B cell (primary cell): ENCODE measurements at regions of chr6 and their contacts with region 1.

Region 1: DNA sequence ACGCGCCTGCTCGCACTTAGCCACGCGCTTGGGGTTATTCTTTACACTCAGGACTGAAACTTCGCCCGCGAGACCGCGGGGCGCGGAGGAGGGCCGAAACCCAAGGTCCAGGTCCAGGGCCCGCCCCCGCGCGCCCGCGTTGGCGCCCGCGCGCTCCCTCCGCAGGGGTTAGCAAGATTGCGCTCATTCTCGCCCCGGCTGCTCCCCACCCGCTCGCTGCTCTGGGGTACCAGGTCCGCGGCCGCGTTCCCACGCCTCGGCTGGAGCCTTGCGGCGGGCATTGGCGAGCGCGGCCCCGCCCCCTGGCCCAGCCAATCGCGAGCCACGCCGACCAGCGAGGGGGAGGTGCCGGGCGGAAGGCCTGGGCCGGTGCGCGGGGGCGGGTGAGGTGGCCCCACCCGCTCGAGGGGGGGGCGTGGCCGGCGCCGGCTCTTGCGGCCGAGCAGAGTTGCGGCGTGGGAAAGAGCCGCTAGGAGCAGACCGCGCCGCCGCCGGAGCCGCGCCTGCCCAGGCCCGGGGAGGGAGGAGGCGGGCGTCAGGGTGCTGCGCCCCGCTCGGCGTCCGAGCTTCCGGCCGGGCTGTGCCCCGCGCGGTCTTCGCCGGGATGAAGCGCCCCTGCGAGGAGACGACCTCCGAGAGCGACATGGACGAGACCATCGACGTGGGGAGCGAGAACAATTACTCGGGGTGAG is at the start of gene HEY2:
- DNase-seq: peak; percentile 92
- ATAC-seq: peak; percentile 94
- H3K4me3 ChIP-seq: peak within 1 kb of the TSS; percentile 44 to 75 (median 67)
- H3K4me3 Mint-ChIP-seq: peak within 1 kb of the TSS; percentile 96
- H3K27ac ChIP-seq: peak within 1 kb of the TSS in 1 of 2 donors; percentile 37
- H3K27ac Mint-ChIP-seq: peak within 1 kb of the TSS; percentile 83
- H3K4me1 ChIP-seq: peaks cover 35 to 42% of the 10 kb centered on the region in 2 donors
- H3K4me1 Mint-ChIP-seq: peaks cover 37% of the 10 kb centered on the region
- H3K27me3 ChIP-seq: peaks cover 0 to 58% (median 50%) of the 10 kb centered on the region in 4 experiments
- H3K27me3 Mint-ChIP-seq: peaks cover 61% of the 10 kb centered on the region
- CTCF ChIP-seq: no peak
- total RNA-seq, gene HEY2: not detected in 2 replicates

Region 2: DNA sequence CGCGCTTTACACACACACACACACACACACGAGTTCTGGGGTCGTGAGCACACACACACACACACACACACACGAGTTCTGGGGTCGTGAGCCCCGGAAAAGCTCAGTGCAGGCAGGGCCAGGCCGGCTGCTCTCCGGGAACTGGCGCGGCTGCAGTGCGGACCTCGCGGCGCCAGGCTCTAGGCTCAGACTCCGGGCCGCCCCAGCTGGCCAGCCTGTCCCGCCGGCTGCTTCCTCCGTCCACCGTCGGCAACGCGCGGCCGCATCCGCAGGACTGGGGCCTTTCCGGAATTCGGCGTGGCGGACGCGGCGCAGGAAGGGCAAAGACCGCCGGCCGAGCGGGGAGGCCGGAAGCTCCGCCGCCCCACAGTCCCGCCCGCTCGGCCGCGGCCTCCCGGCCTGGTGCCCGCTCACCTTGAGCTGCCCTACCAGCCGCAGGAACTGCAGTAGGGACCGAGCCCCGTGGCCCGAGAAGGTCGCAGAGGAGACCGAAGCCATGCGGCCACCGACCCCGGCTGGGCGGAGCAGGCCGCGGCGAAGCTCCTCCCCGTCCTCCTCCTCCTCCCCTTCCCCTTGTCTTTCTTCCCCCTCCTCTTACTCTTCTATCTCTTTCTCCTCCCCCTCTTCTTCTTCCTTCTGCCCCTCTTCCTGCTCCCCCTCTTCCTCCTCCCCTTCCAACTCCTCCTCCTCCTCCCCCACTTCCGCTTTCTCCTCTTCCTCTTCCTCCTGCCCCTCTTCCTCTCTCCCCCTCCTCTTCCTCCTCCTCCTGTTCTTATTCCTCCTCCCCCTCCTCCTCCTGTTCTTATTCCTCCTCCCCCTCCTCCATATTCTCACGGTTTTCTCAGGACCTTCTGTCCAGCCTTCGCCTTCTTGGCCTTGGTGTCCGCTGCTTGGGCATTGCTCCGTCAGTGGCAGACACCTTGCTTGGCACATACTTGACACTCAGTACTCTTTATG is 447.6 kb before region 1 on chr6 and contains the start of gene HDDC2:
- CTCF ChIA-PET with region 1: interaction called, 375 read pairs
- POLR2A ChIA-PET with region 1: interaction called, 16 read pairs
- intact Hi-C with region 1: loop called (anchors 1 kb)
- DNase-seq: peak; percentile 63
- ATAC-seq: peak; percentile 72
- H3K4me3 ChIP-seq: peak within 1 kb of the TSS; percentile 61 to 85 (median 81)
- H3K4me3 Mint-ChIP-seq: peak within 1 kb of the TSS; percentile 93
- H3K27ac ChIP-seq: peak within 1 kb of the TSS; percentile 38 to 81
- H3K27ac Mint-ChIP-seq: peak within 1 kb of the TSS; percentile 87
- H3K4me1 ChIP-seq: peaks cover 16% of the 10 kb centered on the region in 2 donors
- H3K4me1 Mint-ChIP-seq: peaks cover 43% of the 10 kb centered on the region
- H3K27me3 ChIP-seq: peaks cover 0 to 8% (median 0%) of the 10 kb centered on the region in 4 experiments
- H3K27me3 Mint-ChIP-seq: peaks cover 18% of the 10 kb centered on the region
- CTCF ChIP-seq: no peak
- total RNA-seq, gene HDDC2: 31.6 and 38.4 TPM in 2 replicates

Region 3: GRCh38 chr6:125764121-125764671 is 14.9 kb after region 1 on chr6:
- CTCF ChIA-PET with region 1: interaction called, 50 read pairs
- POLR2A ChIA-PET with region 1: no interaction called
- intact Hi-C with region 1: no loop called
- DNase-seq: no peak
- ATAC-seq: no peak
- H3K4me3 ChIP-seq: no peak overlapping the region
- H3K4me3 Mint-ChIP-seq: no peak overlapping the region
- H3K27ac ChIP-seq: no peak overlapping the region
- H3K27ac Mint-ChIP-seq: no peak overlapping the region
- H3K4me1 ChIP-seq: no peaks in the 10 kb centered on the region
- H3K4me1 Mint-ChIP-seq: peaks cover 1% of the 10 kb centered on the region
- H3K27me3 ChIP-seq: peaks cover 0 to 14% (median 8%) of the 10 kb centered on the region in 4 experiments
- H3K27me3 Mint-ChIP-seq: peaks cover 55% of the 10 kb centered on the region
- CTCF ChIP-seq: no peak

Region 4: DNA sequence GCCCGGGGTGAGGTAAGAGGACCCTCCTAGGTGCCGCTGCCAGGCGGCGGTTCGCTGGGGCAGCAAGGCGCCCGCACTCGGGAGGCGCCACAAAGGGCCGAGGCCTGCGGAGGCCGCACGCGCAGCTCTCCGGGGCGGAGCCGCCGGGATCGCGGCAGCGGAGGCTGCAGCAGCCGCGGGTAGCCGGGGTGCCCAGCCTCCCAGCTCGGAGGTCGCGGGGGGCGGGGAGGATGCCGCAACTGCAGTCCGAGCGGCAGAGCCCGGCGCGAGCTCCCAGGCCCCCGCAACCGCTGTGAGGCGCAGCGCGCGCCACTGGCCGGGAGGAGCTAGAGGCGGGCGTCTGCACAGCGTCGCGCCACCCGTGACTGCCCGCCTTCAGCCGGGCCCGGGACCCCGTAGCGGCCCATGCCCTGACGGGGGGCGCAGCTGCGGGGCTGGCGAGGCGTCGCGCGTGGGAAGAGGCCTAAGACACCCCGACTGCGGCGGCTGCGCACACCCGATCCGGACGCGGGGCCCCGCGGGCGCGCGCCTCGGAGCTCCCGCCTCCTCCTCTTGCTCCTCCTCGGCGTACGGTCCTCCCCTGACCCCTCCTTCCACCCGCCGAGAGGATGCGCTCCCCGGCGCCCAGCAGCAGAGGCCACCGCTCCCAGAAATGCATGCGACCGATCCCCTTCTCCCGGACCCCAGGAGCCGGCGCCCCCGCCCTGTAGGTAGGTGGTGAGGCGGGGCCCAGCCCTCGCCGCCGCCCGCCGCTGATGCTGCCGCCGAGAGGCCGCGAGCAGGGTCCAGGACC is 41.2 kb after region 1 on chr6 and contains the start of gene NCOA7:
- CTCF ChIA-PET with region 1: interaction called, 8 read pairs
- POLR2A ChIA-PET with region 1: no interaction called
- intact Hi-C with region 1: loop called (anchors 2 kb)
- DNase-seq: peak; percentile 85
- ATAC-seq: peak; percentile 77
- H3K4me3 ChIP-seq: peak within 1 kb of the TSS; percentile 47 to 88 (median 78)
- H3K4me3 Mint-ChIP-seq: peak within 1 kb of the TSS; percentile 93
- H3K27ac ChIP-seq: peak within 1 kb of the TSS; percentile 70 to 85
- H3K27ac Mint-ChIP-seq: peak within 1 kb of the TSS; percentile 99
- H3K4me1 ChIP-seq: peaks cover 20 to 30% of the 10 kb centered on the region in 2 donors
- H3K4me1 Mint-ChIP-seq: peaks cover 49% of the 10 kb centered on the region
- H3K27me3 ChIP-seq: no peaks in the 10 kb centered on the region
- H3K27me3 Mint-ChIP-seq: peaks cover under 1% of the 10 kb centered on the region
- CTCF ChIP-seq: no peak
- total RNA-seq, gene NCOA7: 27.0 and 27.4 TPM in 2 replicates

Region 5: DNA sequence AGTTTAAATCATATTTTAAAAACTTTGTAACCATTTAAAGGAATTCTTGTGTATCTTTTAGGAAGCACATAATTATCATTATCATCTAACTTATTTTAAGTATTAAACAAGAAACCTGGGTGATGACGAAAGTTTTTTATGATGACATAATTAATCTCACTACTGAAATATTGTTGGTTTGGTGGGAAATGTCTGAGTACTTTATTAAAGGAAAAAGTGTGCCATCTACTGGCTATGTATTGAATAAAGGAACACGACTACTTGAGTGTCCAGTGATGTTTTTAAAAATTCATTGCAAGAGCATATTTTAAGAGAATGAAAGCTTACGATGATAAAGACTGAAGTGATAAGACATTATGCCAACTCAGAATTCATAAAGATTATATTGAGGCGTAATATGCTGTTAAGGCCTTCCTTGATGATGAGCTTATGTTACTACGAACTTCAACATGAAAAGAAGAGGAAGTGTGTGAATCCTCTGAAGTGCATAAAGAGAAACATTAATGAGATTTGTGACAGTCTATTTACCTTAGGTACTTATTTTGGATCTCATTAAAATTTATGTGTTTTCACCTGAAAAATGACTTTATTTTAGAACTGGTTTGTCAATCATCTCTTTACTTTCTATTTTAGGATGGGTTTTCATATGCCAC is 225.0 kb after region 1 on chr6:
- CTCF ChIA-PET with region 1: interaction called, 13 read pairs
- POLR2A ChIA-PET with region 1: no interaction called
- intact Hi-C with region 1: no loop called
- DNase-seq: peak; percentile 67
- ATAC-seq: peak; percentile 56
- H3K4me3 ChIP-seq: no peak overlapping the region
- H3K4me3 Mint-ChIP-seq: no peak overlapping the region
- H3K27ac ChIP-seq: peak overlapping the region in 1 of 2 donors; percentile 38
- H3K27ac Mint-ChIP-seq: no peak overlapping the region
- H3K4me1 ChIP-seq: peaks cover 0 to 4% of the 10 kb centered on the region in 2 donors
- H3K4me1 Mint-ChIP-seq: peaks cover 14% of the 10 kb centered on the region
- H3K27me3 ChIP-seq: no peaks in the 10 kb centered on the region
- H3K27me3 Mint-ChIP-seq: no peaks in the 10 kb centered on the region
- CTCF ChIP-seq: peak; percentile 79